Gastrocnemius medialis (tissue), 4 donors: ENCODE measurements at regions of chr1 and their contacts with region 1.

Region 1: GRCh38 chr1:169115891-169116585 is 9.5 kb downstream of the ATP1B1 start:
- DNase-seq: peak in 1 of 2 donors; percentile 89
- ATAC-seq: peak in 1 of 2 donors; percentile 37
- H3K4me3 ChIP-seq: peak overlapping the region in 3 of 4 donors; percentile 12 to 35 (median 26)
- H3K27ac ChIP-seq: peak overlapping the region; percentile 93 to 99 (median 96)
- H3K4me1 ChIP-seq: peaks cover 95 to 97% of the 10 kb centered on the region in 2 donors
- H3K27me3 ChIP-seq: no peaks in the 10 kb centered on the region
- CTCF ChIP-seq: no peak
- POLR2A ChIP-seq: no peak

Region 2: GRCh38 chr1:168603501-168604110 is 512.4 kb before region 1 on chr1:
- in situ Hi-C with region 1: loop called in 2 of 4 experiments (anchors 10 kb)
- intact Hi-C with region 1: loop called (anchors 1 kb)
- DNase-seq: peak; percentile 68 to 79
- ATAC-seq: peak; percentile 53 to 69
- H3K4me3 ChIP-seq: no peak overlapping the region
- H3K27ac ChIP-seq: peak overlapping the region; percentile 17 to 100 (median 56)
- H3K4me1 ChIP-seq: peaks cover 28 to 32% of the 10 kb centered on the region in 2 donors
- H3K27me3 ChIP-seq: no peaks in the 10 kb centered on the region
- CTCF ChIP-seq: peak; percentile 86 to 93 (median 87)
- POLR2A ChIP-seq: no peak

Region 3: DNA sequence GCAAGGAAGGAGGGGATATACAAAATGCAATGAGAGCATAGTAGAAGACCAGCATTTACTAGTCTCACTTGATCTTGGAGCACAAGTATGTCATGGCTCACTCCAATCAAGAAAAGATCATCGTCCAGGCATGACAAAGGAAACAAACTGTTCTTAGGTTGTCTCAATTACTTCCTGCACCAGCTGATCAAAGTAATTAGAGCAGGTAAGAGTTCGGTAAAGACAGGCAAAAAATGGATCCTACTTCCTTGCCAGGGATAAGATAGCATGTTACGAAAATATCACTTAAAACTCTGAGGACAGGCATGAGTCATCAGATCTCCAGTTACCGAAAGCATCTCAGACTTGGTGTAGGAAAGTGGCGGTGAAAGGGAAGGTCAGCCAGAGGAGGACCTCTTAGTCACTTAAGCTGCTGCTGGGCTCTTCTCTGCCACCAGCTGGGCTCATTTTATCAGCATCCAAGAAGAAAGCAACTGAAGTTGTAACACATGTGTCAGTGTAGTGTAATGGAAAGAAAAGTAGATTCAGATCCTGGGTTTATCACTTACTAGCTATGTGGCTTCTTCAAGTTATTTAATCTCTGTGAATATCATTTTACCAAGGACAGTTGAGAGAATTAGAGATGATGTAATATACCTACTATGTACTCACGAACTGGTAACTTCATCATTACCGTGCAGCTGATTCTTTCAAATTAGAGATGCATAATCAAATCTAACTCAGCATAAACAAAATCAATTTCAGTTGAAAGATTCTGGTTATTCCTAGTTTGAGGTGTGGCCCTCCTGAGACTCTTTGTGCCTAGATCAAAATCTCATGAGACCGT is 492.8 kb before region 1 on chr1:
- in situ Hi-C with region 1: loop called in 2 of 4 experiments (anchors 10 to 25 kb)
- intact Hi-C with region 1: no loop called
- DNase-seq: peak; percentile 88 to 92
- ATAC-seq: peak; percentile 88 to 93
- H3K4me3 ChIP-seq: peak overlapping the region in 3 of 4 donors; percentile 15 to 31 (median 24)
- H3K27ac ChIP-seq: peak overlapping the region; percentile 85 to 100 (median 90)
- H3K4me1 ChIP-seq: peaks cover 29 to 37% of the 10 kb centered on the region in 2 donors
- H3K27me3 ChIP-seq: no peaks in the 10 kb centered on the region
- CTCF ChIP-seq: peak in 2 of 5 experiments; percentile 22 to 25
- POLR2A ChIP-seq: peak in 1 of 2 donors; percentile 81

Region 4: DNA sequence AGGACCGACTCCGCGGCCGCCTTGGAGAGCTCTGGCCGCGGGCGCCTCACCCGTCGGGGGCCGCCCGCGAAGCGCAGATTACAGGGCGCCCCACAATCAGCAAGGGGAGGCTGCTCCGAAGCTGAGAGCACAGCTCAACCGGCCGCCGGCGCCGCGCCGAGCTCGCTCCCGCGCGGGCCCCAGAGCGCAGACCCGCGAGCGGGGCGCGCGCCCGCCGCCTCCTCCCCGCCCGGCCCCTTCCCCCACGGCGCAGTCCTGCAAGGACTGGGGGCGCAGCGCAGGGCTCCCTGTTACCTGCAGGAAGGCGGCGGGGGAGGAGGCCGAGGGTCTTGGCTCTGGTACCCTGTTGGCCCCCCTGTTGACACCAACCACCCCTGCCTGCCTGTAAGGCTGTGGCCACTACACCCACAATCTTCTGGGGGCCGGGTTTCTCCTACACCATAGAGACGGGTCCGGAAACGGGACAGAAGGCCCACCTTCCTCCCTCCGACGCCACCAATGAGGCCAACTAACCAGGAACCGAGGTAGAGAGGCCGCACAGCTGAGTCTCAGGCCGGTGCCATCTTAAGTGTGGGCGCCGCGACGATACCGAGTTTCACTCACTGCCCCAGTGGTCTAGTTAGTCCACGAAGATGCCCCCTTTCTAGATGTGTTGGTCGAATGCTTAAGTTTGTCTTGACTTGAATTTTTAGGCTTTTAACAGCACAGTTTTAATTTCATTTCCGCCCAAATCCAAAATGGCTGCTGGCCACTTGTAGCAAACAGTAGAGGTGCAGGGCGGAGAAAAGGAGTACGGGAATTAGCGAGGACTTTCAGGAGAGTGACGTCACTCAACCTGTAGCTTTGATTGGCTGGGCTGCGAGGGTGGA is 777.7 kb after region 1 on chr1 and contains the start of gene SCYL3:
- in situ Hi-C with region 1: no loop called
- intact Hi-C with region 1: loop called (anchors 10 kb)
- DNase-seq: peak; percentile 94
- ATAC-seq: peak; percentile 98 to 99
- H3K4me3 ChIP-seq: peak within 1 kb of the TSS; percentile 74 to 99 (median 96)
- H3K27ac ChIP-seq: peak within 1 kb of the TSS; percentile 87 to 98 (median 94)
- H3K4me1 ChIP-seq: peaks cover 11 to 24% of the 10 kb centered on the region in 2 donors
- H3K27me3 ChIP-seq: peaks cover 0 to 3% (median 0%) of the 10 kb centered on the region in 3 donors
- CTCF ChIP-seq: no peak
- POLR2A ChIP-seq: peak; percentile 48 to 63
- total RNA-seq, gene SCYL3: 6.2 to 14.3 (median 12.8) TPM